ENCODE measurements at regions of chrX and their contacts with region 1.

Region 1: DNA sequence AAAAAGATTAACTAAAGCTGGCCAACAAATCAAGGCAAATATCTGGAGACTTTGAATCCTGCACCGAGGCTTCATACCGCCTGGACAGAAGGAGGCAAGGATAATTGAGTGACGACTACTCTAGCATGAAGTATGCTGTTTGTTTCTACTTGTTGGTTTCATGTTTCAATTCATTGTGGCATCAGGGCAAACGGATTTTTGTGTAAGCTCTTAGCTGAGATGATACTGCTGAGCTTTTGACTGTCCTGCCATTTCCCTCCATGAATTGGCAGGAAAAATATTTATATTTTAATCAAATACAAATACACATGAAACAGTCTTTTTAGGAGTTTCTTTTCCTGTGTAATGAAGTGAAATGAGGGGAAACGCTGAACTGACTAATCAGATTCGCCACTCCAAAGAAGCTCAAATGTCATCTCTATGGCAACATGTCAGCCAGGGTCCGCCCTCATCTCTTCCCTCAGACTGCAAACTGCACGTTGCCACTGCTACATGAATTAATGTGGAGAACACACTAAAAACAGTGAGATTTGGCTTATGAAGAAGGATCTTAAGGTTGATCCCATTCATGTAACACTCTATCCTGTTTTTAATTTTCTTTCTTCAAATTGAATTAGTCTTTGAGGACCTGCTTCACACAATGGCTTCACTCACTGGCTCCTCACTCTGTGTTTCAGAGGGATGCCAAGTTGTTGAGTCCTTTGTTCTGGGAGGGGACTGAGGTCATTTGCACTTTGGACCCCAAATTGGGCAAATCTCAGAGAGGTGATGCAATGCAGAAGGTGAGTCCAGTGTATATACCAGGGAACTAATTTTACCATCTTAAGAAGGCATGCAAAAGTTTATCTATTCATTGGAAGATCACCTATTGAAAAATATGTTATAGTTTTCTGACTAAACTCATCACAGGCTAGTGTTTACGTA is 149.6 kb upstream of the MID1 start:
- DNase-seq: no peak
- H3K4me3 ChIP-seq: peak overlapping the region in 1 of 3 donors; percentile 15
- H3K27ac ChIP-seq: no peak overlapping the region
- H3K4me1 ChIP-seq: no peaks in the 10 kb centered on the region
- H3K27me3 ChIP-seq: peaks cover 0 to 13% of the 10 kb centered on the region in 2 donors
- CTCF ChIP-seq: no peak
- POLR2A ChIP-seq: no peak

Region 2: DNA sequence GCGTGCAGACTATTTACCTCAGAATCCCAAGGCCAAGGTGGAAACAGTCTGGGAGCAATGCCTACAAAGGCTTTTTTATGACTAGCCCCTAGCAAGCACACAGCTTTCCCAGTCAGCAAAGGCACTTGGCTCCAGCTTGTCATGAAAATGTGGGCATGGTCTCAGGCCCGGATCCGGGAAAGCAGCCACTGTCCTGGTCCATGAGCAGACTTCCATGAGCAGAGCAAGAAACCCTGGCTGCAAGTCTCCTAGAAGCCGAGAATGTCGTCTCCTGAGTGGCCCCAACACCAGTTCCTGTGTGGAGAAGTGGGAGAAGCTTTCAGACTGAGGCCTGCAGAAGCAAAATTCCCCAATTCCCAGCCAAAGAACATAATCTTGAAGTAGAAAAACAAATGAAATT is 340.1 kb before region 1 on chrX:
- intact Hi-C with region 1: loop called (anchors 5 kb)
- DNase-seq: no peak
- H3K4me3 ChIP-seq: no peak overlapping the region
- H3K27ac ChIP-seq: no peak overlapping the region
- H3K4me1 ChIP-seq: no peaks in the 10 kb centered on the region
- H3K27me3 ChIP-seq: no peaks in the 10 kb centered on the region
- CTCF ChIP-seq: no peak
- POLR2A ChIP-seq: no peak